ENCODE measurements at regions of chr18 and their contacts with region 1.

Region 1: GRCh38 chr18:7177116-7177744 is 53.7 kb upstream of the LRRC30 start:
- H3K4me3 Mint-ChIP-seq: no peak overlapping the region
- H3K27ac Mint-ChIP-seq: no peak overlapping the region
- H3K4me1 Mint-ChIP-seq: no peaks in the 10 kb centered on the region
- H3K27me3 Mint-ChIP-seq: no peaks in the 10 kb centered on the region

Region 2: GRCh38 chr18:6682437-6683111 is 494.7 kb before region 1 on chr18:
- intact Hi-C with region 1: no loop called
- H3K4me3 Mint-ChIP-seq: no peak overlapping the region
- H3K27ac Mint-ChIP-seq: no peak overlapping the region
- H3K4me1 Mint-ChIP-seq: no peaks in the 10 kb centered on the region
- H3K27me3 Mint-ChIP-seq: no peaks in the 10 kb centered on the region

Region 3: GRCh38 chr18:6920099-6920899 is 256.9 kb before region 1 on chr18:
- intact Hi-C with region 1: loop called (anchors 10 kb)
- H3K4me3 Mint-ChIP-seq: no peak overlapping the region
- H3K27ac Mint-ChIP-seq: no peak overlapping the region
- H3K4me1 Mint-ChIP-seq: no peaks in the 10 kb centered on the region
- H3K27me3 Mint-ChIP-seq: no peaks in the 10 kb centered on the region

Measured in dendritic cell treated with granulocyte-macrophage colony-stimulating factor and Interleukin-4, amounts not matched to agents 40 ng/mL and 50 ng/mL, for 4 days (primary cell).